CD4-positive, alpha-beta memory T cell (primary cell): ENCODE measurements at regions of chr22 and their contacts with region 1.

Region 1: GRCh38 chr22:31272522-31273446 is 19.5 kb downstream of the PIK3IP1 start:
- DNase-seq: peak in 3 of 5 donors; percentile 44 to 56 (median 51)
- H3K4me3 ChIP-seq: no peak overlapping the region
- H3K4me3 Mint-ChIP-seq: peak overlapping the region in 1 of 8 donors; percentile 2
- H3K27ac ChIP-seq: no peak overlapping the region
- H3K27ac Mint-ChIP-seq: peak overlapping the region; percentile 61 to 84 (median 73)
- H3K4me1 ChIP-seq: peaks cover 52% of the 10 kb centered on the region
- H3K4me1 Mint-ChIP-seq: peaks cover 30 to 77% (median 51%) of the 10 kb centered on the region in 4 donors
- H3K27me3 ChIP-seq: no peaks in the 10 kb centered on the region
- H3K27me3 Mint-ChIP-seq: no peaks in the 10 kb centered on the region

Region 2: GRCh38 chr22:31107178-31107893 is 165.4 kb before region 1 on chr22 and contains the start of gene SELENOM:
- CTCF ChIA-PET with region 1: interaction called, 12 read pairs
- POLR2A ChIA-PET with region 1: interaction called, 3 read pairs
- intact Hi-C with region 1: loop called (anchors 1 kb)
- DNase-seq: peak; percentile 84 to 90 (median 85)
- H3K4me3 ChIP-seq: peak within 1 kb of the TSS; percentile 80 to 97
- H3K4me3 Mint-ChIP-seq: peak within 1 kb of the TSS; percentile 89 to 97 (median 94)
- H3K27ac ChIP-seq: peak within 1 kb of the TSS; percentile 62
- H3K27ac Mint-ChIP-seq: peak within 1 kb of the TSS; percentile 86 to 96 (median 94)
- H3K4me1 ChIP-seq: peaks cover 20% of the 10 kb centered on the region
- H3K4me1 Mint-ChIP-seq: peaks cover 17 to 31% (median 24%) of the 10 kb centered on the region in 4 donors
- H3K27me3 ChIP-seq: no peaks in the 10 kb centered on the region
- H3K27me3 Mint-ChIP-seq: no peaks in the 10 kb centered on the region
- total RNA-seq, gene SELENOM: 64.2 to 68.6 TPM

Region 3: GRCh38 chr22:31211862-31212730 is 60.7 kb before region 1 on chr22 and contains the start of gene LIMK2:
- CTCF ChIA-PET with region 1: interaction called, 113 read pairs
- POLR2A ChIA-PET with region 1: interaction called, 86 read pairs
- intact Hi-C with region 1: loop called (anchors 1 kb)
- DNase-seq: peak; percentile 93 to 94 (median 94)
- H3K4me3 ChIP-seq: peak within 1 kb of the TSS; percentile 74 to 92
- H3K4me3 Mint-ChIP-seq: peak within 1 kb of the TSS; percentile 89 to 98 (median 90)
- H3K27ac ChIP-seq: peak within 1 kb of the TSS; percentile 81
- H3K27ac Mint-ChIP-seq: peak within 1 kb of the TSS; percentile 76 to 97 (median 94)
- H3K4me1 ChIP-seq: peaks cover 61% of the 10 kb centered on the region
- H3K4me1 Mint-ChIP-seq: peaks cover 43 to 68% (median 50%) of the 10 kb centered on the region in 4 donors
- H3K27me3 ChIP-seq: no peaks in the 10 kb centered on the region
- H3K27me3 Mint-ChIP-seq: no peaks in the 10 kb centered on the region
- total RNA-seq, gene LIMK2: 32.2 to 33.2 TPM

Region 4: GRCh38 chr22:31230871-31231621 is 41.7 kb before region 1 on chr22:
- CTCF ChIA-PET with region 1: interaction called, 29 read pairs
- POLR2A ChIA-PET with region 1: interaction called, 8 read pairs
- intact Hi-C with region 1: no loop called
- DNase-seq: peak; percentile 60 to 65 (median 61)
- H3K4me3 ChIP-seq: no peak overlapping the region
- H3K4me3 Mint-ChIP-seq: peak overlapping the region in 6 of 8 donors; percentile 21 to 84 (median 56)
- H3K27ac ChIP-seq: peak overlapping the region; percentile 43
- H3K27ac Mint-ChIP-seq: peak overlapping the region; percentile 81 to 96 (median 92)
- H3K4me1 ChIP-seq: peaks cover 30% of the 10 kb centered on the region
- H3K4me1 Mint-ChIP-seq: peaks cover 36 to 68% (median 54%) of the 10 kb centered on the region in 4 donors
- H3K27me3 ChIP-seq: no peaks in the 10 kb centered on the region
- H3K27me3 Mint-ChIP-seq: no peaks in the 10 kb centered on the region

Region 5: DNA sequence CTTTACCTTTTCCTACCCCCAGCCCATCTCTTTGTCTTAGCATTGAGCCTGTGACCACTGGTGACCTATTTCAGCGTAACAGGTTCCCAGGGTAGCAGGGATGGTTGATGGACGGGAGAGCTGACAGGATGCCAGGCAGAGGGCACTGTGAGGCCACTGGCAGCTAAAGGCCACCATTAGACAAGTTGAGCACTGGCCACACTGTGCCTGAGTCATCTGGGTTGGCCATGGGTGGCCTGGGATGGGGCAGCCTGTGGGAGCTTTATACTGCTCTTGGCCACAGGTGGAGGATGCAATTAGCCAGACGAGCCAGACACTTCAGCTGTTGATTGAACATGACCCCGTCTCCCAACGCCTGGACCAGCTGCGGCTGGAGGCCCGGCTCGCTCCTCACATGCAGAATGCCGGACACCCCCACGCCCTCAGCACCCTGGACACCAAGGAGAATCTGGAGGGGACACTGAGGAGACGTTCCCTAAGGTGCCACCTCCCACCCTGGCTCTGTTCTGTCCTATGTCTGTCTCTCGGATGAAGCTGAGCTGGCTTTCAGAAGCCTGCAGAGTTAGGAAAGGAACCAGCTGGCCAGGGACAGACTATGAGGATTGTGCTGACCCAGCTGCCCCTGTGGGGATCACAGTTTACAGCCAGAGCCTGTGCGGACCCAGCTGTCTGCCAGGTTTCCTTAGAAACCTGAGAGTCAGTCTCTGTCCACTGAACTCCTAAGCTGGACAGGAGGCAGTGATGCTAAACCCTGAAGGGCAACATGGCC is 10.3 kb before region 1 on chr22:
- CTCF ChIA-PET with region 1: interaction called, 71 read pairs
- POLR2A ChIA-PET with region 1: interaction called, 39 read pairs
- intact Hi-C with region 1: no loop called
- DNase-seq: no peak
- H3K4me3 ChIP-seq: no peak overlapping the region
- H3K4me3 Mint-ChIP-seq: no peak overlapping the region
- H3K27ac ChIP-seq: no peak overlapping the region
- H3K27ac Mint-ChIP-seq: peak overlapping the region in 3 of 7 donors; percentile 32 to 65 (median 41)
- H3K4me1 ChIP-seq: no peaks in the 10 kb centered on the region
- H3K4me1 Mint-ChIP-seq: peaks cover 0 to 10% (median 6%) of the 10 kb centered on the region in 4 donors
- H3K27me3 ChIP-seq: no peaks in the 10 kb centered on the region
- H3K27me3 Mint-ChIP-seq: no peaks in the 10 kb centered on the region